ENCODE measurements at regions of chr17 and their contacts with region 1.

Region 1: GRCh38 chr17:4215882-4216570 is 47.8 kb downstream of the ANKFY1 start:
- DNase-seq: no peak
- H3K4me3 Mint-ChIP-seq: no peak overlapping the region
- H3K27ac Mint-ChIP-seq: peak overlapping the region; percentile 65
- H3K4me1 Mint-ChIP-seq: peaks cover 6% of the 10 kb centered on the region
- H3K27me3 Mint-ChIP-seq: no peaks in the 10 kb centered on the region

Region 2: GRCh38 chr17:4074831-4075495 is 141.1 kb before region 1 on chr17:
- CTCF ChIA-PET with region 1: no interaction called
- DNase-seq: peak; percentile 26
- H3K4me3 Mint-ChIP-seq: no peak overlapping the region
- H3K27ac Mint-ChIP-seq: peak overlapping the region; percentile 9
- H3K4me1 Mint-ChIP-seq: no peaks in the 10 kb centered on the region
- H3K27me3 Mint-ChIP-seq: no peaks in the 10 kb centered on the region

Region 3: GRCh38 chr17:4188076-4188475 is 27.9 kb before region 1 on chr17:
- CTCF ChIA-PET with region 1: no interaction called
- DNase-seq: no peak
- H3K4me3 Mint-ChIP-seq: no peak overlapping the region
- H3K27ac Mint-ChIP-seq: no peak overlapping the region
- H3K4me1 Mint-ChIP-seq: peaks cover 14% of the 10 kb centered on the region
- H3K27me3 Mint-ChIP-seq: no peaks in the 10 kb centered on the region

Region 4: DNA sequence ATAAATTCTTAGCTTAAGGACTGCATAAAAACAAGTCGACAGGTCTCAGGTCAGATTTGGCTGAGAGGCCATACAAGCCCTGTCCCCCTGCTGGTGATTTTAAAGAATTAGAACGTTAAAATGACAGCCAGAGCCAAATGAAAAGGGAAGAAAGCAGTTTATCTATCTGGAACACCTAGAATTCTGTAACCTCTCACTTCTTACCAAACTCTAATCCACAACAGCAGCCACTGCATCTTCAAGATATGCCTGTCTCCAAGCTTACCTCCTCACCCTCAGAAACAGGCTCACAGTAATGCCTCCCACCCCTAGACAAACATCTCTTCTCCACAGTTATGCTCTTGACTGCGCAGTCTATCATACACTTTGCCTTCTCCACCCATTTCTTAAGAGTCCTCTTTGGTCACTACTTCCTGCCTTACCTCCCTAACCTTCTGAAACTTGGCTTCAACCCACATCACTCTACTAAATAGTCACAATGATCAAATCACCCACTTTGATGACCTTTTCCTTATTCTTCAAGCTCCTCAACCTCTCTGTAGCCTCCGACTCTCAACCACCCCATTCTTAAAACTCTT is 33.5 kb after region 1 on chr17:
- CTCF ChIA-PET with region 1: interaction called, 12 read pairs
- DNase-seq: no peak
- H3K4me3 Mint-ChIP-seq: no peak overlapping the region
- H3K27ac Mint-ChIP-seq: no peak overlapping the region
- H3K4me1 Mint-ChIP-seq: peaks cover 25% of the 10 kb centered on the region
- H3K27me3 Mint-ChIP-seq: no peaks in the 10 kb centered on the region

Region 5: GRCh38 chr17:4304417-4305027 is 88.5 kb after region 1 on chr17:
- CTCF ChIA-PET with region 1: interaction called, 11 read pairs
- DNase-seq: peak; percentile 71
- H3K4me3 Mint-ChIP-seq: no peak overlapping the region
- H3K27ac Mint-ChIP-seq: no peak overlapping the region
- H3K4me1 Mint-ChIP-seq: peaks cover 14% of the 10 kb centered on the region
- H3K27me3 Mint-ChIP-seq: no peaks in the 10 kb centered on the region

Region 6: DNA sequence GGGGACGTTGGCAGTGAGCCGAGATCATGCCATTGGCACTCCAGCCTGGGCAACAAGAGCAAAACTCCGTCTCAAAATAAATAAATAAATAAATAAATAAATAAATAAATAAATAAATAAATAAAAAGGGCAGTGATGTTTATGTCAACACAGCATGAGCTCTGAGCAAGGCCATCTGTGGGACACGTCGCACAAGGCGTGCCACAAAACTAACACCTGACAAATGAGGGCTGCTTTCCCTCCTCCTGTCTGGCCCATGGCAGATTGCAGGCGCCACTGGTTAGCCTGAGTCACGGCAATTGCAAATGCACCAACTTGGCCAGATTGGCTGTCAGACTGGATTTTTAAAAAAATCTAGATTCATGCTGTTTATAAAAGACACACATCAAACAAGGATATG is 191.8 kb after region 1 on chr17:
- CTCF ChIA-PET with region 1: interaction called, 15 read pairs
- DNase-seq: no peak
- H3K4me3 Mint-ChIP-seq: no peak overlapping the region
- H3K27ac Mint-ChIP-seq: no peak overlapping the region
- H3K4me1 Mint-ChIP-seq: peaks cover 2% of the 10 kb centered on the region
- H3K27me3 Mint-ChIP-seq: peaks cover 5% of the 10 kb centered on the region

Region 7: GRCh38 chr17:4412933-4413831 is 197.2 kb after region 1 on chr17:
- CTCF ChIA-PET with region 1: interaction called, 22 read pairs
- DNase-seq: peak; percentile 95
- H3K4me3 Mint-ChIP-seq: peak overlapping the region; percentile 56
- H3K27ac Mint-ChIP-seq: peak overlapping the region; percentile 14
- H3K4me1 Mint-ChIP-seq: peaks cover 7% of the 10 kb centered on the region
- H3K27me3 Mint-ChIP-seq: peaks cover 5% of the 10 kb centered on the region

Region 8: DNA sequence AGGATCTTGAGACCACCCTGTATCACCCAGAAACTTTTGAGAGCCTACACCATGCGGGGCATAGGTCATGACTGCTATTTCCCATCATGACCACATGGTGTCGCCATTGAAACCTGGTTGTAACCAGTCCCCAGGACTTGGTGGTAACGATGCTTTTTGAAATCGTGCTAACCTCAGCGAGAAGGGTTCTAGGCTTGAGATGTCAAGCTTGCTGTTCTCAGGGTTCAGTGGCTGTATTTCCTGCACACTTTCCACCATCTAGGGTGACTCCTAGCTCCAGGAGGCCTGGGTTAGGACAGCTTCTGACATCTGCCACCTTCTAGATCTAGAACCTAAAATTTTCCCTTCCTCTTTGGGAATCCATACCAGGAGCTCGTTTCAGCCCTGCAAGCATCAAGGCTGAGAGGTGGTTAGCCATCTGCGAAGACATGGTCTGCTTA is 204.7 kb after region 1 on chr17:
- CTCF ChIA-PET with region 1: interaction called, 22 read pairs
- DNase-seq: peak; percentile 75
- H3K4me3 Mint-ChIP-seq: no peak overlapping the region
- H3K27ac Mint-ChIP-seq: no peak overlapping the region
- H3K4me1 Mint-ChIP-seq: peaks cover 5% of the 10 kb centered on the region
- H3K27me3 Mint-ChIP-seq: peaks cover 11% of the 10 kb centered on the region

Measured in activated naive CD4-positive, alpha-beta T cell treated with anti-CD3 and anti-CD28 coated beads, Interleukin-2, amount 10 ng/mL, durations not matched to agents 7 days and 5 days (primary cell).